ENCODE measurements at regions of chr5 and their contacts with region 1.

Region 1: DNA sequence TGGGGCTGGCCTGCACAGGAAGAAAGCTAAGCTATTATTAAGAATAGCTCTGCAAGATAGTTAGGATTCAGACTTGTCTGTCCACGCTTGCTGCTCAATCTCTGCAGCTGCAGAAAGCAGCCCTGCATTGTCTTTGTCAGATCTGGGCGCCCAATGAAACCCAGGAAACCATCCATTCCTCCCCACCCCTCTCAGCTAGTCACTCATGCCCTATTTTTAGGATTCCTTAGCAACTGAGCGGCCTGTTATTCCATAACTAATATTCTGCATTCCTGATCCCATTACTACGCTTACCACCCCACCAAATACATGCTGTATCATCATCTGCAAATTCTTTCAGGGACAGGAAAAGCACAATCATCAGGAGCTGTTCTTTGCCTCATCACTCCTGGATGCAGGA is 52.9 kb upstream of the APC start:
- DNase-seq: peak; percentile 11 to 50
- ATAC-seq: peak; percentile 69 to 95 (median 93)
- H3K4me3 ChIP-seq: no peak overlapping the region
- H3K27ac ChIP-seq: peak overlapping the region in 9 of 10 donors; percentile 5 to 83 (median 71)
- H3K4me1 ChIP-seq: peaks cover 0 to 38% (median 20%) of the 10 kb centered on the region in 9 donors
- H3K27me3 ChIP-seq: peaks cover 0 to 4% (median 0%) of the 10 kb centered on the region in 7 donors
- CTCF ChIP-seq: no peak

Region 2: DNA sequence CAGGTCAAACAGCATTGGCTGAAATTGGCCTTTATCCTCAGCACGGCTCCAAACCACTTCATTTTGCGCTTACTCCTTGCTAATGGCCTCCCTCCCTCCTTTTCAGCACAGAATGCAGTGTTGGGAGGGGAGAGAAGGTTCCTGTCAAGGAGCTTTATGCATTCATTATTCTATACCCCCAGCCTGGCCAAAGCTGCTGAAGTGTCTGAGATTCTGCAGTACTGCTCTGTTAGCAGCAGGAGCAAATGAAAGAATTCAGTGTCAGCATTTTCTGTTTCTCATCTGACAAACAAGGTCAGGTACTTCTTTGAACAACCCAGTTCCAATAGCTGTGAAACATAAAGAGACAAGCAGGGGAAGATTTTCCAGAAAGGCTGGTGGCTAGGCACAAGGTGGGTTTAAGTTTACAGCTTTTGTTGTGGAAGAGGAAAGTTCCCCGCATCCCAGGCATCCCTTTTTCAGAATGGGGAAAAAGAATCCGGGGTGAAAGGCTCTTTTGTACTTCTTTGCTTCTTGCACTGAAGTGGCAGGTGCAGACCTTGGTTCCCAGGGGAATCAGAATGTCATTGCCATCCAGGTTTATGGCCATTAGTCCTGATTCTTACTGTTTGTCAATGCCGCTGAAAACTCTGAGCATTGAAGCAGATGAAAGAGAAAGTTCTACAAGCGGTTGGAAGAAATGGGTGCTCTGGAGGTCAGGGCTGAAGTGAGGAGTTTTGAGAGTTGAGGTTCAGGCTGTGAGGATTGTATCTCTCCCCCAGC is 56.3 kb before region 1 on chr5:
- intact Hi-C with region 1: loop called in 2 of 10 experiments (anchors 5 kb)
- DNase-seq: no peak
- ATAC-seq: no peak
- H3K4me3 ChIP-seq: no peak overlapping the region
- H3K27ac ChIP-seq: no peak overlapping the region
- H3K4me1 ChIP-seq: peaks cover 0 to 28% (median 0%) of the 10 kb centered on the region in 9 donors
- H3K27me3 ChIP-seq: peaks cover 0 to 4% (median 0%) of the 10 kb centered on the region in 7 donors
- CTCF ChIP-seq: no peak

Region 3: DNA sequence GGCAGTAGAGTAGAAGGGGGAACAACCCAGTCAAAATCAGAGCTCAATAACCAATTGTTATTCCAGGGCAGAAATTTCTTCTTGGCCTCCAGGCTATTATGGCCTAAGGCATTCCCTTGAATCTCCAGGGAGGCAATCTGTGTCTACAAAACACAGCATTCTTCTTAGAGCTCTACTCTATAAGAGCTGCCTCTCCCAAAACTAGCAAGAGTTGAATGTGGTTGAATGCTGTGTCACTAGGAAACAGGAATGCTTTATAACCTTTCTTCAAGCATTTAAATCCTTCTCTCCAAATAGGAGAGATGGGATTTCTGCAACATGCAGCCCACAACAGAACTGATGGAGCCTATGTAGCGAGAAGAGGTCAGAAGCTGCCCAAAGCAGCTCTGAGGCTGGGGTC is 44.2 kb before region 1 on chr5:
- intact Hi-C with region 1: loop called in 1 of 10 experiments (anchors 5 kb)
- DNase-seq: no peak
- ATAC-seq: no peak
- H3K4me3 ChIP-seq: no peak overlapping the region
- H3K27ac ChIP-seq: no peak overlapping the region
- H3K4me1 ChIP-seq: peaks cover 7 to 47% (median 21%) of the 10 kb centered on the region in 9 donors
- H3K27me3 ChIP-seq: no peaks in the 10 kb centered on the region
- CTCF ChIP-seq: no peak

Region 4: GRCh38 chr5:113232667-113233066 is 547.9 kb after region 1 on chr5:
- intact Hi-C with region 1: no loop called
- DNase-seq: peak in 1 of 2 donors; percentile 54
- ATAC-seq: peak in 7 of 8 donors; percentile 56 to 86 (median 76)
- H3K4me3 ChIP-seq: no peak overlapping the region
- H3K27ac ChIP-seq: peak overlapping the region in 5 of 10 donors; percentile 5 to 39 (median 21)
- H3K4me1 ChIP-seq: peaks cover 0 to 72% (median 60%) of the 10 kb centered on the region in 9 donors
- H3K27me3 ChIP-seq: no peaks in the 10 kb centered on the region
- CTCF ChIP-seq: no peak